IMR-90 (cell line): ENCODE measurements at regions of chrX and their contacts with region 1.

Region 1: GRCh38 chrX:84501798-84502628 is at the start of gene HDX:
- DNase-seq: peak; percentile 81
- ATAC-seq: peak; percentile 99
- H3K4me3 ChIP-seq: peak within 1 kb of the TSS; percentile 58
- H3K27ac ChIP-seq: peak within 1 kb of the TSS; percentile 83
- H3K4me1 ChIP-seq: no peaks in the 10 kb centered on the region
- H3K27me3 ChIP-seq: no peaks in the 10 kb centered on the region
- CTCF ChIP-seq: no peak
- POLR2A ChIP-seq: peak; percentile 45; the same call in 1 of the 2 replicates
- RAD21 ChIP-seq: no peak
- total RNA-seq, gene HDX: 11.4 and 11.8 TPM in 2 replicates

Region 2: DNA sequence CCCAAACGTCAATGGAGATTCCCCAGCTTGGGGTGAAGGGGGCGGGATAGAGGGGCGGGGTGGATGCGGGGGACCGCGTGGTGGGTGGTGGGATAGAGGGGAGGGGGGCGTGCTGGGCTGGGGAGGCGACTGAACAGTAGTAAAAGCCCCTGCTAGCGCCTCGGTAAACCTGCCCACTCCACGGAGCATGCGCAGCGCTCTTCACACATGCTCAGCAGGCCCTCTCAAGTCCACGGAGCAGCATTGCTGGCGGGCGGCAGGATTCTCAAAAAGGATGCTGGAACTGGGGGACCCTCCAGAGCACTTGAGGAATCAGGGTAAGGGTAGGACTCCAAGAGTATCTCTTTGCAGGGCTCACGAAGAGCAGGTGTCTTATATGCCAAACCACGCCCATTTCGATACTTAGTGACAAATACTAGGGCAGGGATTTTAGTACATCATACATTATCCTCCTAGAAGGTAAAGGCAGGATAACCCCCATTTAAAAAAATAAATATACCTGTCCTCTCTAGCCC is 313.6 kb before region 1 on chrX:
- CTCF ChIA-PET with region 1: no interaction called
- POLR2A ChIA-PET with region 1: no interaction called
- dilution Hi-C with region 1: no loop called
- in situ Hi-C with region 1: no loop called
- intact Hi-C with region 1: loop called (anchors 10 kb)
- DNase-seq: peak; percentile 64
- ATAC-seq: peak; percentile 75
- H3K4me3 ChIP-seq: peak overlapping the region; percentile 68
- H3K27ac ChIP-seq: no peak overlapping the region
- H3K4me1 ChIP-seq: no peaks in the 10 kb centered on the region
- H3K27me3 ChIP-seq: no peaks in the 10 kb centered on the region
- CTCF ChIP-seq: 0 out of 2 replicates have a peak, but pooled peaks have one; percentile 5
- POLR2A ChIP-seq: no peak
- RAD21 ChIP-seq: 0 out of 2 replicates have a peak, but pooled peaks have one; percentile 8

Region 3: GRCh38 chrX:84441143-84441542 is 60.9 kb before region 1 on chrX:
- CTCF ChIA-PET with region 1: no interaction called
- POLR2A ChIA-PET with region 1: no interaction called
- dilution Hi-C with region 1: no loop called
- in situ Hi-C with region 1: no loop called
- intact Hi-C with region 1: loop called (anchors 10 kb)
- DNase-seq: peak; percentile 72
- ATAC-seq: peak; percentile 86
- H3K4me3 ChIP-seq: no peak overlapping the region
- H3K27ac ChIP-seq: no peak overlapping the region
- H3K4me1 ChIP-seq: no peaks in the 10 kb centered on the region
- H3K27me3 ChIP-seq: no peaks in the 10 kb centered on the region
- CTCF ChIP-seq: no peak
- POLR2A ChIP-seq: no peak
- RAD21 ChIP-seq: no peak